ENCODE measurements at regions of chr1 and their contacts with region 1.

Region 1: GRCh38 chr1:204819495-204819894 is 51.2 kb upstream of the NFASC start:
- DNase-seq: no peak
- H3K4me3 Mint-ChIP-seq: no peak overlapping the region
- H3K27ac Mint-ChIP-seq: no peak overlapping the region
- H3K4me1 Mint-ChIP-seq: no peaks in the 10 kb centered on the region
- H3K27me3 Mint-ChIP-seq: peaks cover 82% of the 10 kb centered on the region
- CTCF ChIP-seq: no peak

Region 2: DNA sequence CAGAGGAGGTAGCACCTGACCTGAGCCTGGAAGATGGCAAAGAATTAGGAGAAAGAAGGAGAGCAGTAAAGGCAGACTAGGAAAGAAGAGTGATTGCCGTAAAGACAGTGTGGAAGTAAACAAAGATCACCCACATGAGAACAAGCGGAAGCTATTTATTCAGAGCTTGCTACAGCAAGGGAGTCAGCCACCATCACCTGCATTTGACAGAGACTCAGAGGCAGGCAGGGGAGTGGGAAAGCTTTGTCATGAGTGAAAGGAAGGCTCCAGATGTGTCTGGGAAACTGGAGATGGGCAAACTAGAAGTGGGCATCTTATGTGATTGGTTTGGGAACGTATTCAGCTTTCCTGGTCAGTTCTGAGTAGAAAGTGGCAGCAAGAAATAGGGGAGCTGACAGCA is 115.7 kb after region 1 on chr1:
- CTCF ChIA-PET with region 1: interaction called, 165 read pairs
- POLR2A ChIA-PET with region 1: no interaction called
- intact Hi-C with region 1: loop called (anchors 2 kb)
- DNase-seq: no peak
- H3K4me3 Mint-ChIP-seq: no peak overlapping the region
- H3K27ac Mint-ChIP-seq: no peak overlapping the region
- H3K4me1 Mint-ChIP-seq: no peaks in the 10 kb centered on the region
- H3K27me3 Mint-ChIP-seq: peaks cover 12% of the 10 kb centered on the region
- CTCF ChIP-seq: no peak